Activated CD4-positive, alpha-beta memory T cell treated with anti-CD3 and anti-CD28 coated beads for 36 hours (primary cell): ENCODE measurements at regions of chr5 and their contacts with region 1.

Region 1: DNA sequence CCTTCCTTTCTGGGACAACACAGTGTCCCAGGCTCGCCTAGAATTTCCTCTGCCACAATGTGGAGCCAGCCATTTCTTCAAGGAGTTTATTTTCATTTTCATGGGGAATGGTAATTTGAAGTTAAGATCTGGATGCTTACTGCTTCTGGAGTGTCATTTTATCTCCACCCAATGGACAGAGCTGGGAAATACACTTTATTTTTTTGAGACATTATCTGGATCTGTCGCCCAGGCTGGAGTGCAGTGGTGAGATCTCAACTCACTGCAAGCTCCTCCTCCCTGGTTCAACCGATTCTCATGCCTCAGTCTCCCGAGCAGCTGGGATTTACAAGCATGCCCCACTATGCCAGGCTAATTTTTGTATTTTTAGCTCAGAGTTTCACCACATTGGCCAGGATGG is 12.7 kb upstream of the THG1L start:
- DNase-seq: no peak
- H3K4me3 Mint-ChIP-seq: no peak overlapping the region
- H3K27ac Mint-ChIP-seq: no peak overlapping the region
- H3K4me1 Mint-ChIP-seq: peaks cover 21% of the 10 kb centered on the region
- H3K27me3 Mint-ChIP-seq: no peaks in the 10 kb centered on the region

Region 2: GRCh38 chr5:157342822-157343402 is 375.6 kb before region 1 on chr5:
- CTCF ChIA-PET with region 1: interaction called, 17 read pairs
- POLR2A ChIA-PET with region 1: no interaction called
- intact Hi-C with region 1: no loop called
- DNase-seq: peak; percentile 52
- H3K4me3 Mint-ChIP-seq: no peak overlapping the region
- H3K27ac Mint-ChIP-seq: peak overlapping the region; percentile 91
- H3K4me1 Mint-ChIP-seq: peaks cover 39% of the 10 kb centered on the region
- H3K27me3 Mint-ChIP-seq: no peaks in the 10 kb centered on the region

Region 3: GRCh38 chr5:157471709-157472108 is 246.8 kb before region 1 on chr5:
- CTCF ChIA-PET with region 1: interaction called, 17 read pairs
- POLR2A ChIA-PET with region 1: no interaction called
- intact Hi-C with region 1: no loop called
- DNase-seq: peak; percentile 40
- H3K4me3 Mint-ChIP-seq: no peak overlapping the region
- H3K27ac Mint-ChIP-seq: no peak overlapping the region
- H3K4me1 Mint-ChIP-seq: no peaks in the 10 kb centered on the region
- H3K27me3 Mint-ChIP-seq: no peaks in the 10 kb centered on the region

Region 4: GRCh38 chr5:157670662-157671591 is 47.6 kb before region 1 on chr5 and contains the start of gene C5orf52:
- CTCF ChIA-PET with region 1: interaction called, 30 read pairs
- POLR2A ChIA-PET with region 1: no interaction called
- intact Hi-C with region 1: loop called (anchors 1 kb)
- DNase-seq: peak; percentile 39
- H3K4me3 Mint-ChIP-seq: peak within 1 kb of the TSS; percentile 77
- H3K27ac Mint-ChIP-seq: peak within 1 kb of the TSS; percentile 47
- H3K4me1 Mint-ChIP-seq: peaks cover 20% of the 10 kb centered on the region
- H3K27me3 Mint-ChIP-seq: peaks cover 5% of the 10 kb centered on the region
- total RNA-seq, gene C5orf52: not detected

Region 5: DNA sequence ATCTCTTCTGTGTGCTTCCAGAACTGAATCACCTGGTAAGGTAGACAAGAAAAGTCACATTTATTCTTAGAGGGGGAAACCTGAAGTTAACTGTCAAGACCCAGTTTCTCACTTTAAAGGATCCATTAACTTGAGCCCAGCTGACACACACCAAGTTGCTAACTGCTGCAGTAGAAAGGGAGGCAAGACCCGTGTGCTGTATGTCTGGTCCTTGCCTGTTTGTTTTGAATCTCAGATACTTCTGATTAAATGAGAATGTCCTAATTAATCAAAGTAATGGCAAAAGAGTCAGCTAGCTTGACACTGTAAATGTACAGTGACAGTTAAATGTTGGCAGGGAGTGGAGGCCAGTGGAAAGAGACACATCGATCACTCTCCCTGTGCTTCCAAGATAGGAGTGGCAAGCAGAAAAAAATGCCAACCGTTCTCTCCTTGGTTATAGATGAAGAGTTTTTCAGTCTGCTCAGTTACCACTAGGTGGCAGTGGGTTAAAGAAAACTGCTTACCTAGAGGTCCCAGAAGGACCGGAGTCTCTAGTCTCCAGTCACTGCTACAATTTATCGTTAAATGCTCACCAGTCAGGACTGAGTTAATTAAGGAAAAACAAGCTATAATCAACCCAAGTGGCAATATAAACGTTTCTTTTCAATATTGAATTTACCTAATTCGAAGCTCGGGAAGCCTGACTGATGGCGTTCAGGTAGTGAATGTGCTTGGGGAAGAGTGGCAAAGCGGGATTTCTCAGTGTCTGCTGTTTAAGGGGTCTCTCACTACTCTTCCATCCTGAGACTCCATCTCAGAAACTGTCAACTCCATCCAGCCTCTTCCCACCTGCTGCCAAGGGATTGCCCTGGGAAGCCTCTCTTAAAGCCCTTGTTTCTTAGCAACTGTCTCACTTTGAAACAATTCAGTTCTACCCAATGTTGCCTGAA is 43.4 kb after region 1 on chr5:
- CTCF ChIA-PET with region 1: no interaction called
- POLR2A ChIA-PET with region 1: no interaction called
- intact Hi-C with region 1: no loop called
- DNase-seq: no peak
- H3K4me3 Mint-ChIP-seq: no peak overlapping the region
- H3K27ac Mint-ChIP-seq: no peak overlapping the region
- H3K4me1 Mint-ChIP-seq: peaks cover 15% of the 10 kb centered on the region
- H3K27me3 Mint-ChIP-seq: no peaks in the 10 kb centered on the region